ENCODE measurements at regions of chr10 and their contacts with region 1.

Region 1: DNA sequence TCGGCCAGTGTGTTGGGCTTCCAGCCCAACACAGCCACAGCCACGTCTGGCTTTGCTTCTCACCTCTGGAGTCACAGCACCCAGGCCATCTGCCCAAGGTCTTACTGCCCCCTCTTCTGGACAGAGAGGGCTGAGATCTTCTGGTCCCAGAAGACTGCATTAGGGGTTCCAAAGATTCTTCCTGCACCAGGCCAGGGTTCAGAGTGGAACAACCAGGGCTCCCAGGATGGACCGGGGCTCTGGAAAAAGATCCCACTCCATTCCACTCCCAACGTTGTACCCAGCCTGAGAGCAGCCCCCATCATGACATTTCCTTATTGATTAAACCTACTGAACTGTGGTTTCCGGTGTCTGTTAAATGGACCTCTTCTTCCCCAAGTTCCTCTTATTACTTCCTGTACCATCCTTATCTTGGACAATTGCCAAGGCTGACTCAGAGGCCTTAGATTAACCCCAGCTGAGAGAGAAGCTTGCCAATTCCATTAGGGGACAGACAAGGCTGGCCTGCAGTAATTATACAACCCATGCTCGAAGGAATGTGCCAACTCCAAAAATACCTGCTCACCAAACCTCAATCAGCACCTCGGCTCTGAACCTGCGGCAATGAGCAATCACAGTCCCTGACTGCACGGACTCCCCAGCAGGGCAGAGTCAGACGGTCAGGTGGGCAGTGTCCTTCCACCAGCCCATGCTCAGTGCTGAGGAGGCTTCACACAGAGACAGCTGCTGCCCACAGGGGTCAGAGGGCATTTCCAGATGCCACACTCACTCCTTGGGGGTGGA is 47.9 kb upstream of the NPFFR1 start:
- DNase-seq: peak; percentile 71
- H3K4me3 ChIP-seq: no peak overlapping the region
- H3K27ac ChIP-seq: no peak overlapping the region
- H3K4me1 ChIP-seq: peaks cover 8% of the 10 kb centered on the region
- H3K27me3 ChIP-seq: peaks cover 22 to 26% of the 10 kb centered on the region in 2 experiments
- CTCF ChIP-seq: peak in 1 of 2 donors; percentile 11
- POLR2A ChIP-seq: no peak

Region 2: DNA sequence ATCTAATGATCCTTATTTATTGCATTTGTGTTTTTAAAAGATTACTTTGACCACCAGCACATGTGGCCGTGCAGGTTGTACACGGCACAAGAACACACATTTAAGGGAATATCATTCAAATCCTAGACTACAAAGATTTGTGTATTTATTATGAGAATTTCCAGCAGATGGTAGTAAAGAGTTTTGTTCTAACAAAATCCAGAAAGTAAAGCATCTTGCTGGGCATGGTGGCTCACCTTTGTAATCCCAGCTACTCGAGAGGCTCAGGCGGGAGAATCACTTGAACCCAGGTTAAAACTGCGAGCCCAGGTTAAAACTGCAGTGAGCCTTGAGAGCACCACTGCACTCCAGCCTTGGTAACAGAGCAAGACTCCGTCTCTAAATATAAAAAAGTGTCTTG is 247.5 kb before region 1 on chr10:
- CTCF ChIA-PET with region 1: no interaction called
- POLR2A ChIA-PET with region 1: no interaction called
- dilution Hi-C with region 1: no loop called
- intact Hi-C with region 1: no loop called
- DNase-seq: no peak
- H3K4me3 ChIP-seq: no peak overlapping the region
- H3K27ac ChIP-seq: no peak overlapping the region
- H3K4me1 ChIP-seq: no peaks in the 10 kb centered on the region
- H3K27me3 ChIP-seq: peaks cover 19% of the 10 kb centered on the region in 2 experiments
- CTCF ChIP-seq: no peak
- POLR2A ChIP-seq: no peak

Region 3: DNA sequence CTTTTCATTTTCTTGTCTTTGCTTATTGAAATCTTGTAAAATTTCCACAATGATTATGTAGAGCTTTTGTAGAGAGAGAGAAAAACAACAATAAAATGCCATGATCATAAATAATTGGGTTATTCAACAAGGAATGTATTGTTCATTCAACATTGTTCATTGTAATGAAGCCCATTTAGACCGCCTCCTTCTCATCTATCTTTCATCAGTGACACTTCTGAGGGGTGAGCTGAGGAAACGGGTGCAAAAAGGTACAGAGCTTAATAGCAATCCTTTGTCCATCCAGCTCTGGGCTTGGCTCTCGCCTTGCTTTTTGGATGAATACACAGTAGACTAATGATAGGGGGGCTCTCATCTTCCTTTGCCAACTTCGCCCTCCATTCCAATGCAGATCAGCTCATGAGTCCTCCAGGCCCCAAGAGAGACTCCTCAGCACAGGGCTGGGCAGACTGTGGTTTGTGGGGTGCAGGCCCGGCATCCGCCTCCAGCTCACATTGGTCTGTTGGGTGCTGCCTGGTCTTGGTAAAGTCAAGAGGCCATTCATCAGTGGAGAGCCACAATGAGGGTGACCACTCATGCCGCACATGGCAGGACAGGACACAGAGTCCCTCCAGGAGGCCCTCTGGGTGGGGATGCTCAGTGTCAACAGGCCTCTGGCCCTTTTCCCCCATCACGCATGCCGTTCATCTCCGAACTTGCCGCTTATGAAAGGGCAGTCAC is 80.6 kb before region 1 on chr10:
- CTCF ChIA-PET with region 1: no interaction called
- POLR2A ChIA-PET with region 1: no interaction called
- dilution Hi-C with region 1: no loop called
- intact Hi-C with region 1: no loop called
- DNase-seq: no peak
- H3K4me3 ChIP-seq: no peak overlapping the region
- H3K27ac ChIP-seq: no peak overlapping the region
- H3K4me1 ChIP-seq: peaks cover 3% of the 10 kb centered on the region
- H3K27me3 ChIP-seq: peaks cover 47 to 67% of the 10 kb centered on the region in 2 experiments
- CTCF ChIP-seq: no peak
- POLR2A ChIP-seq: no peak

Region 4: GRCh38 chr10:70729763-70730352 is 398.2 kb after region 1 on chr10:
- CTCF ChIA-PET with region 1: no interaction called
- POLR2A ChIA-PET with region 1: no interaction called
- dilution Hi-C with region 1: no loop called
- intact Hi-C with region 1: loop called (anchors 5 kb)
- DNase-seq: no peak
- H3K4me3 ChIP-seq: no peak overlapping the region
- H3K27ac ChIP-seq: no peak overlapping the region
- H3K4me1 ChIP-seq: no peaks in the 10 kb centered on the region
- H3K27me3 ChIP-seq: peaks cover 0 to 2% of the 10 kb centered on the region in 2 experiments
- CTCF ChIP-seq: no peak
- POLR2A ChIP-seq: no peak

Measured in endothelial cell of umbilical vein (primary cell).